ENCODE measurements at regions of chr6 and their contacts with region 1.

Region 1: DNA sequence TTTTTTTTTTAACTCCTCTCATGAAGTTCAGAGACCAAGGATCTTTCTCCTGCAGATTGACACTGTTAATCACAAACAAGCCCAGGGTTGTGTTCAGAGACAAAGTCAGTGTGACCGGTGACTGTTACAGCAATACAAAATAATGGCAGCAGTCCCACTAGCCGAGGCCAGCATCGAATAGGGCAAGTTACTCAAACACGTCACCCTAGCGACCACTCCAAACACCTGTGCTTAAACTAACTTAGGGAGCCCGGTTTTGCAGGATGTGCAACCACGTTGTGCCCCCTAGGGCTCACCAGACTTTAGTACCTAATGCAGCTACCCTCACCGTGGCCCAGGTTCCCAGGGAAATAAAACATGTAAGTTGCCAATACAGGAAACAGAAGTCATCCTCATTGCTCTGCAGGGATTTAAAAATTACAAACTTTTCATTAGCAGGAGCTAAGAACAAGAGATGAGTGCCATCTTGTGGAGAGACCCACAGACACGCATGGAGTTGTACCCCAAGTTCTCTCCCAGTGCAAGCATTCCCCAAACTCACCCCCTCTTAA is 38.1 kb downstream of the FAM50B start:
- DNase-seq: no peak

Region 2: DNA sequence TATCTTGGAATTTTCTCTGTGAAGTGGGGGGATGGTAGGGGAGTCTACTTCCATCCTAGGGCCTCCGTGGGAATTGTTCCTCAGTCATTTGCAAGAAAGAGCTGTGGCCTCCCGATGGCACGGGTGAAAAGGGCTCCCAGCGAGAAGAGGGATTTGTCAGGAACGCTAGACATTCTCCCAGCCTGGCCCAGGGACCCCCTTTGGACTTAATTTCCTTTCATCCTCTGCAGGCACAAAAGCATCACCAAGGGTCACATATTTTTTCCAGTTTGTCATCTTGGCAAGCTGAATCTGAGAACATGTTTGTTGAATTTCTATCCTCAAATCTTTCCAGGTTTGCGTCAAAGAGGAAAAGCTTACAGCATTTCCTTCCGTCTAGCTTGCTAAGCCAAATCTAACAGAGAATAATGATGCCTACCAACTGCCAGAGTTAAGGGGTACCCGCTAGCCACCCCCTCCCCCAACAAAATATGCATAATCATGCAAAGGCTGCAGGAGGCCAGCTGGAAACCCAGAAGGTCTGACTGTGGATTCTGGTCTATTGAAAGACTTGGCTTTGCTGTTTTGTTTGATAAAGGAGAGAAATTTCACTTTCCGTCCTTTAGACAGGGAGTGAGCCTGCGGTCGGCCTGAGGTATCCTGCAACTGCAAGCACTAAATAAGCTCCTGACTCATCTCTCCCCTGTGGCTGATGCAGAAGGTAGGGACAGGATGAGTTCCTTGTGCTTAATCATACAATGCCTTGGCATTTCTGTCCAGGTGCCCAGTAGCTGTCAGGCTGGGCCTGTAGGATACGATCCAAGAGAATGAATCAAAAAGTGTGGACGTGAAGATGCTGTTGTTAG is 605.4 kb before region 1 on chr6:
- intact Hi-C with region 1: loop called (anchors 10 kb)
- DNase-seq: peak; percentile 70

Region 3: DNA sequence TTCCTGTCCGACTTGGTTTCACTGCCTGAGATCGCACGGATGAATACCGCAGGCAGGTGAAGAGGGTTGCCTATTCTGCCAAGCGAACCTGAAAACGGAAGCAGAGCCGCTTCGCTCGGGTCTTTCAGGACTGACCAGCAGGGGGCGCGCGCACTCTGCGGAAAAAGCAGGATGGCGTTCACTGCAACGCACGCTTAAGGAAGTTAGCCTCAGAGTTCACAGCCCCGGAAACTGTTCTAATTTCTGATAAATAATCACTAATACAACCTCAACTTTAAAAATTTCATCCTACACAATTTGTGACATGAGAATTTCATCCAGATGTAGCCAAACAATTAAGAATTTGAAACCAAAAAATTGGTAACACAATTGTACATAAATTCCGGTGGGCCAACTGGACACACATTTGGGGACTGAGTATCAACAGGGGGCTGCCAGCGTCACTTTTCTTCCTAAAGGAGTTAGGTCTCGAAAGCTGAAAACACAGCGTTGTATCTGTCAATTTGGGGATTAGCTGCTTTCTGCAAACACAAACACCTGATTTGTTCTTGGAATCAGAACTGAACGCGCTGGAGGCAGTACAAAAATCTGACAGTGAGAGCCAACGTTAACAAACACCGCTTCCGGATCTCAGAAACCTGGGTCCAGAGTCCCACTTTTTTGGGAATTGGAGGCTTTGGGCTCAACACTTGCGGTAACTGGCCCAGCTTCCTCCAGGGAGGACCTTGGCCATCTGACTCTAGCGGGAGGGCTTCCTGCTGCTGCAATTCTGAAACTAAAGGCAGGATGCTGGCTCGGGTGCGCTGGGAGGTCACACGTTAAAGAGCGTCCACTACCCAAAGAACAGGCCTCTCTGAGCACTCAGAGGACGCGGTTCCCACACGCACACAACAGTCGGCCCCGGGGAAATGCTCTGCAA is 144.5 kb before region 1 on chr6:
- intact Hi-C with region 1: loop called (anchors 2 kb)
- DNase-seq: peak; percentile 95

Region 4: GRCh38 chr6:3825851-3826581 is 61.2 kb before region 1 on chr6:
- intact Hi-C with region 1: loop called (anchors 5 kb)
- DNase-seq: peak; percentile 91

Region 5: GRCh38 chr6:3929281-3929798 is 42.1 kb after region 1 on chr6:
- intact Hi-C with region 1: loop called (anchors 5 kb)
- DNase-seq: no peak

Region 6: GRCh38 chr6:4164117-4164442 is 276.9 kb after region 1 on chr6:
- intact Hi-C with region 1: no loop called
- DNase-seq: no peak

Measured in cardiac septum (tissue), 1 donor.